ENCODE measurements at regions of chr10 and their contacts with region 1.

Region 1: GRCh38 chr10:110671788-110672579 is 27.8 kb downstream of the RBM20 start:
- DNase-seq: peak; percentile 45 to 68 (median 58)
- H3K4me3 ChIP-seq: peak overlapping the region; percentile 60 to 61
- H3K4me3 Mint-ChIP-seq: peak overlapping the region; percentile 88 to 92 (median 90)
- H3K27ac ChIP-seq: peak overlapping the region; percentile 3
- H3K27ac Mint-ChIP-seq: peak overlapping the region in 6 of 7 donors; percentile 45 to 88 (median 76)
- H3K4me1 ChIP-seq: no peaks in the 10 kb centered on the region
- H3K4me1 Mint-ChIP-seq: peaks cover 1 to 8% (median 5%) of the 10 kb centered on the region in 4 donors
- H3K27me3 ChIP-seq: no peaks in the 10 kb centered on the region
- H3K27me3 Mint-ChIP-seq: peaks cover 4 to 7% of the 10 kb centered on the region in 2 donors

Region 2: GRCh38 chr10:110648692-110649346 is 23.2 kb before region 1 on chr10:
- CTCF ChIA-PET with region 1: interaction called, 11 read pairs
- POLR2A ChIA-PET with region 1: no interaction called
- intact Hi-C with region 1: no loop called
- DNase-seq: no peak
- H3K4me3 ChIP-seq: no peak overlapping the region
- H3K4me3 Mint-ChIP-seq: no peak overlapping the region
- H3K27ac ChIP-seq: no peak overlapping the region
- H3K27ac Mint-ChIP-seq: no peak overlapping the region
- H3K4me1 ChIP-seq: peaks cover 5% of the 10 kb centered on the region
- H3K4me1 Mint-ChIP-seq: peaks cover 0 to 13% (median 7%) of the 10 kb centered on the region in 4 donors
- H3K27me3 ChIP-seq: peaks cover 27% of the 10 kb centered on the region
- H3K27me3 Mint-ChIP-seq: peaks cover 35 to 42% of the 10 kb centered on the region in 2 donors

Region 3: DNA sequence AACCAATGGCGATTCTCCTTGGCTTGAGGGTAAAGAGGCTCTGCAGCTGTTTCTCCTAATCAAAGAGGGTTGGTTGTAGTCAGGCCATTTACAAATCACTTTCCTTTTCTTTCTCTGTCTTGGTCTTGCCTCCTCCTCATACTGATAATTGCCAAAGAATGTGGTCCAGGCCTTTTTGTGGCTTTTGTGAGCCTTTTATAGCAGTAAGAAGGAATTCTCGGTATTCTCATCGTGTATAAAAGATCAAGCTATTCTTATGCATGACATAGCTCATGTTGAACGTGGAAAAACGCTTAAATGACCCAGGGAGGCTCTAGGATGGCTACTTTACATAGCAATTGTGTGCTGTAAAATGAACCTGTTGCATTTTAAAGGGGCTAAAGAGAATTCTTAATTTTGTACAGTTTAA is 34.7 kb after region 1 on chr10:
- CTCF ChIA-PET with region 1: interaction called, 14 read pairs
- POLR2A ChIA-PET with region 1: no interaction called
- intact Hi-C with region 1: no loop called
- DNase-seq: no peak
- H3K4me3 ChIP-seq: no peak overlapping the region
- H3K4me3 Mint-ChIP-seq: no peak overlapping the region
- H3K27ac ChIP-seq: no peak overlapping the region
- H3K27ac Mint-ChIP-seq: no peak overlapping the region
- H3K4me1 ChIP-seq: no peaks in the 10 kb centered on the region
- H3K4me1 Mint-ChIP-seq: no peaks in the 10 kb centered on the region
- H3K27me3 ChIP-seq: no peaks in the 10 kb centered on the region
- H3K27me3 Mint-ChIP-seq: peaks cover 0 to 2% of the 10 kb centered on the region in 2 donors